AG04449 (cell line): ENCODE measurements at regions of chr2 and their contacts with region 1.

Region 1: GRCh38 chr2:201860636-201861066 is 54.3 kb downstream of the CDK15 start:
- DNase-seq: peak; percentile 54
- H3K4me3 ChIP-seq: no peak overlapping the region
- CTCF ChIP-seq: peak; percentile 83

Region 2: DNA sequence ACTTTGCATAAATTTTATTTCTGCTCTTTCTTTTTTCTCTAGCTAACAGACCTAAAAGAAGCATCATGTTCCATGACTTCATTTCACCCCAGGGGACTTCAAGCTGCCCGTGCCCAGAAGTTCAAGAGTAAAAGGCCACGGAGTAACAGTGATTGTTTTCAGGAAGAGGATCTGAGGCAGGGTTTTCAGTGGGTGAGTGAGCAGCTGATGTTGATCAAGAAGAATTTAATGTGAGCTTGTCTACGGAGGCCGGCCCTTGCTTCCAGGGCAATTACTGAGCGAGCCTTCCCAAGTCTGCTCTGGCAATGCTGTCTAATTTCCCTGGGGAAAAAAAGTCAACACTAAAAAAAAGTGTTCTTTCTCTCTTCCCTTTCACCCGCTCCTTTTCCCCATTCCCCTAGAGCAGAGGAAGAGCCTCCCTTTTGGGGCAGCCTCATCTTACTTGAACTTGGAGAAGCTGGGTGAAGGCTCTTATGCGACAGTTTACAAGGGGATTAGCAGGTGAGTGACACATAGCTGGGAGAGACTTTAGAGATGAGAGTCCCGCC is 53.1 kb before region 1 on chr2:
- CTCF ChIA-PET with region 1: interaction called, 14 read pairs
- POLR2A ChIA-PET with region 1: no interaction called
- DNase-seq: no peak
- H3K4me3 ChIP-seq: peak overlapping the region; percentile 16
- CTCF ChIP-seq: no peak

Region 3: GRCh38 chr2:201872591-201872990 is 11.9 kb after region 1 on chr2:
- CTCF ChIA-PET with region 1: interaction called, 23 read pairs
- POLR2A ChIA-PET with region 1: no interaction called
- DNase-seq: no peak
- H3K4me3 ChIP-seq: no peak overlapping the region
- CTCF ChIP-seq: no peak

Region 4: GRCh38 chr2:202009019-202009481 is 148.4 kb after region 1 on chr2:
- CTCF ChIA-PET with region 1: interaction called, 22 read pairs
- POLR2A ChIA-PET with region 1: no interaction called
- DNase-seq: no peak
- H3K4me3 ChIP-seq: no peak overlapping the region
- CTCF ChIP-seq: no peak

Region 5: GRCh38 chr2:202056392-202057010 is 195.8 kb after region 1 on chr2:
- CTCF ChIA-PET with region 1: interaction called, 26 read pairs
- POLR2A ChIA-PET with region 1: no interaction called
- DNase-seq: no peak
- H3K4me3 ChIP-seq: no peak overlapping the region
- CTCF ChIP-seq: no peak